GM10248 (cell line): ENCODE measurements at regions of chr12 and their contacts with region 1.

Region 1: DNA sequence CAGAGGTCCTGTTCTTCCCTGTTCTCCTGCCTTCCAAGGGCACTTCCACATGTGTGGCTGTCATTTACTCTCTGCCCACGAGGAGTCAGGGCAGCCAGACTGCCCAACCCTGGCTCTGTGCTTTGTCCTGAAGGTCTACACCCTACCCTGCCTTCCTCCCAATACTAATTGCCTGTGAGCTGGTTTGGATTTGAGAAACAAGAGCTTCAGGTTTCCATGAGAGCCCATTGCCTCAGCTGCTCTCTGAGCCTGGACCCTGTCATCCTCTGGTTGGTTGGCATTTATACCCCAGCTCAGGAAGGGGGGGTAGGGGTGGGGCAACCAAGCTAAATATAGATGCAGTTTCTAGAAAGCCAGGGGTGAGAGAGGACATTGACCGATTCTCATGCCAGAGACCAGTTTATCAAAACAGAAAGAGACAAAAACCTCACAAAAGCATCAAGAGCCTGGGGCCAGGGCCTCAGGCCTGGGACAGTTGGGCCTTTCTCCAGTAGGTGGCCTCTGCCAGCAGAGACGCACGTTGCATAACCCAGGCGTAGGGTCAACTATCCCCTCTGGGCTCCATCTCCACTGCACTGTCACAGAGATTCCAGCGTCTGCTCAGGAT is 34.5 kb downstream of the VDR start:
- DNase-seq: no peak
- CTCF ChIP-seq: peak; percentile 46

Region 2: GRCh38 chr12:47882781-47883546 is 12.7 kb after region 1 on chr12:
- CTCF ChIA-PET with region 1: interaction called, 145 read pairs
- POLR2A ChIA-PET with region 1: interaction called, 8 read pairs
- DNase-seq: peak; percentile 75
- CTCF ChIP-seq: no peak